ENCODE measurements at regions of chr15 and their contacts with region 1.

Region 1: GRCh38 chr15:69058830-69059556 is 44.5 kb downstream of the NOX5 start:
- DNase-seq: peak; percentile 77 to 93 (median 87)
- ATAC-seq: peak; percentile 95
- H3K4me3 ChIP-seq: no peak overlapping the region
- H3K27ac ChIP-seq: no peak overlapping the region
- H3K4me1 ChIP-seq: no peaks in the 10 kb centered on the region
- H3K27me3 ChIP-seq: no peaks in the 10 kb centered on the region
- CTCF ChIP-seq: peak; percentile 84 to 86

Region 2: GRCh38 chr15:69009341-69009740 is 49.7 kb before region 1 on chr15:
- intact Hi-C with region 1: no loop called
- DNase-seq: no peak
- ATAC-seq: peak; percentile 46
- H3K4me3 ChIP-seq: no peak overlapping the region
- H3K27ac ChIP-seq: no peak overlapping the region
- H3K4me1 ChIP-seq: no peaks in the 10 kb centered on the region
- H3K27me3 ChIP-seq: no peaks in the 10 kb centered on the region
- CTCF ChIP-seq: no peak

Region 3: DNA sequence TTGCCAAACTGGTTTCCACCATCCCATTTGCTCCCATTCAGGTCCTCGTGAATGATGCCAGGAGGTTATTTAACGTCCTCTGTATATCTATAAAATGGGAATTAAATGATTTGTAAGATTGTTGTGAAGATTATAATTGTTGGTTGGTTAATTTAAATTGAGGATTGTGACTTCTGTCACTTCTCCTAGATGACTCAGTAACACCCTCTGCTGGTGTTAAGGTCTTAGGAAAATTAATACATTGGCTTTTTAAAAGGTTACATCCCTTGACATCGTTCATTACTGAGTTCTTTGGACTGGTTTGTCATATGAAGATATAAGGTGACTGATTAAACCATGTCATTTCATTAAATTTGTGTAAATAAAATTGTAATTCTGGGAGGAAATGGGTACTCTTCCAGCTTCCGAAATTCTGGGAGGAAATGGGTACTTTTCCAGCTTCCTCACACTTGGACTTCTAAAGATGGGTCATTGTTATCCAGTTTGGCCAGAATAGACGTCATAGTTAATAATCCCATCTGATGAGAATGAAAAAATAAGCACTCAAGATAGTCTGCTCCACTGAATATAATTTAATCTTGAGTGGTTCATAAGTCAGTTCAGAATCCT is 206.5 kb after region 1 on chr15:
- intact Hi-C with region 1: loop called in 1 of 2 experiments (anchors 5 kb)
- DNase-seq: peak in 1 of 4 donors; percentile 31
- ATAC-seq: peak; percentile 64
- H3K4me3 ChIP-seq: no peak overlapping the region
- H3K27ac ChIP-seq: no peak overlapping the region
- H3K4me1 ChIP-seq: no peaks in the 10 kb centered on the region
- H3K27me3 ChIP-seq: no peaks in the 10 kb centered on the region
- CTCF ChIP-seq: peak in 1 of 2 donors; percentile 29

Region 4: DNA sequence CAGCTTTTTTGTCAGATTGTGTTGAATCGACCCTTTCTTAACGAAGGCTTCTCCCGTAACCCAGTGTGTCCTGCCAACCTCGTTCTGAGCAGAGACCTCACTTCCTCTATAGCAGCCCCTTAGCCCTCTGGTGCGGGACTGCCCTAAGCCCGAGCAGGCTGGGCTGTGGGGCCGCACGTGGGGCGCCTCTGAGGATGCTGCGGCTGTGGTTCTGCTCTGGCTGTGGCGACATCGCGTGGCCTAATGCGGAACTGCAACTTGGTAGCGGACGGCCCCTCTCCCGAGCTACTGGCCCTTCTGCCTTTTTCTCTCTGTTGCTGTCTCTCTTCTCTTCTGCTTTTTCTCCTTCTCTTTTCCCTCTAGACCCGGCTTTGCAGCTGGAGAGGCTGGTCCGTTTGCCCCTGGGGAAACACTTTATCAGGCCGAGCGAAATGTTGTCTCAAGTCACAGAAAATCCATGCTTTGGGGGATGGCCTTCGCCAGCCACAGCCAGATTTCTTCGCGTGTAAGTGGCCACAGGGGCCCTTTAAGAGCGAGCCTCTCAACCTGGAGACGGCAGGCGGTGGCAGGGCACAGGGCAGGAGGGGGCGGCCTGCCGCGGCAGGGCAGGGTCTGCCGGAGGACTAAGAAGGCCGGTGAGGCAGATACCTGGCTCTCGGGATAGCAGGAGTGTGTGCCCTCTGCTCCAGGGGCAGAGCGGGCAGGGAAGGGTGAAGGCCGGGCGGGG is 335.7 kb after region 1 on chr15:
- intact Hi-C with region 1: loop called (anchors 5 kb)
- DNase-seq: peak; percentile 72 to 95 (median 82)
- ATAC-seq: peak; percentile 97
- H3K4me3 ChIP-seq: no peak overlapping the region
- H3K27ac ChIP-seq: no peak overlapping the region
- H3K4me1 ChIP-seq: peaks cover 0 to 10% of the 10 kb centered on the region in 2 donors
- H3K27me3 ChIP-seq: peaks cover 0 to 5% of the 10 kb centered on the region in 2 donors
- CTCF ChIP-seq: peak; percentile 96 to 98

Measured in left lung (tissue), 14 donors.